Right ventricle myocardium inferior (tissue), 1 donor: ENCODE measurements at regions of chr10 and their contacts with region 1.

Region 1: GRCh38 chr10:33073641-33074415 is 115.8 kb upstream of the ITGB1 start:
- DNase-seq: no peak
- ATAC-seq: peak; percentile 71

Region 2: DNA sequence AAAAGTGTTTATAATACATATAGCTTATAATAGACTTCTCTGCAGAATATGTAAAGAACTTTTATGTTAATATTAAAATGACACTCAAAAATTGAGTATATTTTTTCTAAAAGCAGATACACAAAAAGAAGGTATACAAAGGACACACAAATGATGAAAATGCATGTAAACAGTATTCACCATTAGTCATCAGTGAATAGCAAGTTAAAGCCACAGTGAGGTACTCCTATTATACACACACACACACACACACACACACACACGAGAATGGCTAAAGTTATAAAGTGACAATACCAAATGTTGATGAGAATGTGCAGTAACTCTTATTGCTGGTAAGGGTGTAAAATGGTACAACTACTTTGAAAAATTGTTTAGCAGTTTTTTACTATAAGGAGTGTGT is 208.7 kb before region 1 on chr10:
- intact Hi-C with region 1: no loop called
- DNase-seq: no peak
- ATAC-seq: no peak

Region 3: DNA sequence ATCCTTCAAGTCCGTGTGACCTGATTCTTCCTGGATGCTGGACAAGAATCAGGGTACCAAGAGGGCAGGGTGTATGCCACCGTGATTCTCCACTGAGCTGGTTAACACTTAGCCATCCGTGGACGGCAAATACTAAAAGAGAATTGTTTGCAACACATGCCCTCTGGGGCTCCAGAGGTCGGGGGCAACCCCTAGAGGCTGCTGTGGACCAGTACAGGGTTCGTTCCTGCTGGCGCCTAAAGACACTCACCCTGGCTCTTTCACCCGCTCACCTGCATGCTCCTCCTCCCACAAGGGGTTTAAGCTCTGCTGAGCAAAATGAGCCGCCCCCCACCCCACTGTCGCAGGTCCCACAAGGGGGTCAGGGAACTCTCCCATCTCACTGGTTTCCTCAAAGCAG is 32.9 kb after region 1 on chr10:
- intact Hi-C with region 1: loop called (anchors 2 kb)
- DNase-seq: no peak
- ATAC-seq: no peak